ENCODE measurements at regions of chr1 and their contacts with region 1.

Region 1: DNA sequence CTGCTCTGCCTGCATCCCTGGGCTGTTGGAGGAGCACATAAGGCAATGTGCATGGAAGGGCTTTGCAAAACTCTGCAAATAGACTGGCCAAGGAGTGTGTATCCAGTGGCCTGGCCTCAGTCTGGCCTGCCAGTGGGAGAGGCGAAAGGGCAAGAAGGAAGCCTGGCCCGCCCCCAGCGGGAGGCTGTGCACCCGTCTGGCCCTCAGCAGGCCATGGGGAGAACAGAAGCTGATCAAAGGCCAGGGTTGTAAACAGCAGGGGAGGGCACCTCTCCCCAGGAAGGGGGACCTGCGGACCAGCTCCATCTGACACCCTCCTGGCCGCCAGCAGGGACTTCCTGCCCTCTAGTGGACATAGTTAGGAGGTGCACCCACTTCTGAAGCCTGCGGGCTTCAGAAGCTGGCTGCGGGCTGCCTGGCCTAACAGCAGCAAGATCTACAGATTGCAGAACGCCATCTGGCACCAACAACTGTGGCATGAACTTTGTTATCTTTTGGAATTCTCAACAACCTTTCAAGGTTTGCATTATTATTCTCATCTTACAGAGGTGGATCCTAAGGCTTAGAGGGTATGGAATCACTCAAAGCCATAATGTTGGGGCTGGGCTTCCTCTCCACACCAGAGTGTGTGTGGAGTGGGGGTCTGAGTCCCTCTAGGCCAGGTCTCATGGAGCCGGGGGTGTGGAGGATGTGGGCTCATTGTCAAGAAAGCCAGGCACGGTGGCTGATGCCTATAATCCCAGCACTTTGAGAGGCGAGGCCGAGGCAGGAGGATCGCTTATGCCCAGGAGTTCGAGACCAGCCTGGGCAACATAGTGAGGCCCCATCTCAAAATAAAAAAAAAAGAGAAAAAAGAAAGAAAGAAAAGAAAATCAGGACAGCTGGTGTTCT is 18.9 kb upstream of the CDK18 start:
- DNase-seq: peak; percentile 92
- H3K4me3 ChIP-seq: peak overlapping the region in 1 of 2 experiments; percentile 22; a peak in 1 of 4 replicates
- H3K27ac ChIP-seq: no peak overlapping the region
- H3K4me1 ChIP-seq: peaks cover 0 to 3% of the 10 kb centered on the region in 2 experiments; a peak in 2 of 4 replicates
- H3K27me3 ChIP-seq: peaks cover 16% of the 10 kb centered on the region; the same call in 1 of the 2 replicates
- CTCF ChIP-seq: peak; percentile 93
- EP300 ChIP-seq: no peak; a peak in 1 of 4 replicates
- RAD21 ChIP-seq: peak; percentile 91

Region 2: GRCh38 chr1:205326812-205327466 is 158.6 kb before region 1 on chr1:
- CTCF ChIA-PET with region 1: interaction called, 13 read pairs
- POLR2A ChIA-PET with region 1: no interaction called
- DNase-seq: no peak
- H3K4me3 ChIP-seq: no peak overlapping the region
- H3K27ac ChIP-seq: no peak overlapping the region
- H3K4me1 ChIP-seq: peaks cover under 1 to 10% of the 10 kb centered on the region in 2 experiments; a peak in 3 of 4 replicates
- H3K27me3 ChIP-seq: no peaks in the 10 kb centered on the region
- CTCF ChIP-seq: no peak
- EP300 ChIP-seq: no peak
- RAD21 ChIP-seq: no peak

Region 3: GRCh38 chr1:205365945-205366463 is 119.6 kb before region 1 on chr1:
- CTCF ChIA-PET with region 1: interaction called, 14 read pairs
- POLR2A ChIA-PET with region 1: interaction called, 3 read pairs
- DNase-seq: no peak
- H3K4me3 ChIP-seq: no peak overlapping the region
- H3K27ac ChIP-seq: no peak overlapping the region
- H3K4me1 ChIP-seq: no peaks in the 10 kb centered on the region; a peak in 1 of 4 replicates
- H3K27me3 ChIP-seq: peaks cover 1% of the 10 kb centered on the region; the same call in 1 of the 2 replicates
- CTCF ChIP-seq: no peak
- EP300 ChIP-seq: no peak
- RAD21 ChIP-seq: no peak

Region 4: GRCh38 chr1:205396967-205397616 is 88.5 kb before region 1 on chr1:
- CTCF ChIA-PET with region 1: interaction called, 190 read pairs
- POLR2A ChIA-PET with region 1: no interaction called
- DNase-seq: peak; percentile 75
- H3K4me3 ChIP-seq: peak overlapping the region in 1 of 2 experiments; percentile 38; a peak in 1 of 4 replicates
- H3K27ac ChIP-seq: no peak overlapping the region
- H3K4me1 ChIP-seq: no peaks in the 10 kb centered on the region
- H3K27me3 ChIP-seq: no peaks in the 10 kb centered on the region; the same call in 1 of the 2 replicates
- CTCF ChIP-seq: peak; percentile 65
- EP300 ChIP-seq: no peak
- RAD21 ChIP-seq: peak; percentile 94

Region 5: DNA sequence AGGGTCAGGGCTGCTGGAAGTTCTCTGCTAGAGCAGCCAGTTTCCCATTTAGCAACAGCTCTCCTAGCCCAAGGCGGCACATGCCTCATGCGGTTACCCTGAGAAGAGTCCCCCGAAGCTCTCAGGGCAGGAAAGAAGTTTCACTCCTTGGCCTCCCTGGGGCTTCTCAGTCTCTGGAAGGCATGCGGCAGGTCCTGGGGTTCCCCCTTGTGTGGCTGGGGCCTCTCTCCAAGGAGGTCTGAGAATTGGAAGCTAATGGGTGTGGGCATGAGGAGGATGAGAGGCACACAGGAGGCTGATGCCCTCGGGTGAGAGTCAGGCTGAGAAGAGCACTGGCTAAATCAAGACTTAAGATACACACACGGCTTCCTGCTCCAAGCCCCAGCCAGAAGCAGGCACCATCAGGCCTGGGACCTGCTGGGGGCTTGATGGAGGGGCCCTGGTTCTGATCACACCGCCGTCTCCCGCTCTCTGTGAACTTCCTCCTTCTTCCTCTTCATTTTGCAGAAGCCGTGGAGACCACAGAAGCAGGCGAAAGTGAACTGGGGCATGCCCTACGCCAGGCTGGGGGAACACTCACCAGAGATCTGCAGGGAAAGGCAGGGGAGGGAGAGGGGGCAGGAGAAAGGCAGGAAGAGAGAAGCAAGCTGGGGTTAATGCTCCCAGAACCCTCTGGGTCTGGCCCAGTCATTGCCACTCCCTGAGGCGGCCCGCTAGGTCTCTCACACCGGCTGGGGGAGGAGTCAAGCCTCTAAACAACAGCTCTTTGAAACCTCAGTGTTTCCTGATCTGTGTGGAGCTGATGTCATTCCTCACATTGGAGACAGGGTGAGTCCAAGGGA is 44.9 kb before region 1 on chr1:
- CTCF ChIA-PET with region 1: interaction called, 10 read pairs
- POLR2A ChIA-PET with region 1: no interaction called
- DNase-seq: no peak
- H3K4me3 ChIP-seq: no peak overlapping the region
- H3K27ac ChIP-seq: no peak overlapping the region
- H3K4me1 ChIP-seq: peaks cover 3 to 5% of the 10 kb centered on the region in 2 experiments; a peak in 2 of 4 replicates
- H3K27me3 ChIP-seq: peaks cover 40% of the 10 kb centered on the region; the same call in 1 of the 2 replicates
- CTCF ChIP-seq: no peak
- EP300 ChIP-seq: no peak
- RAD21 ChIP-seq: no peak

Region 6: DNA sequence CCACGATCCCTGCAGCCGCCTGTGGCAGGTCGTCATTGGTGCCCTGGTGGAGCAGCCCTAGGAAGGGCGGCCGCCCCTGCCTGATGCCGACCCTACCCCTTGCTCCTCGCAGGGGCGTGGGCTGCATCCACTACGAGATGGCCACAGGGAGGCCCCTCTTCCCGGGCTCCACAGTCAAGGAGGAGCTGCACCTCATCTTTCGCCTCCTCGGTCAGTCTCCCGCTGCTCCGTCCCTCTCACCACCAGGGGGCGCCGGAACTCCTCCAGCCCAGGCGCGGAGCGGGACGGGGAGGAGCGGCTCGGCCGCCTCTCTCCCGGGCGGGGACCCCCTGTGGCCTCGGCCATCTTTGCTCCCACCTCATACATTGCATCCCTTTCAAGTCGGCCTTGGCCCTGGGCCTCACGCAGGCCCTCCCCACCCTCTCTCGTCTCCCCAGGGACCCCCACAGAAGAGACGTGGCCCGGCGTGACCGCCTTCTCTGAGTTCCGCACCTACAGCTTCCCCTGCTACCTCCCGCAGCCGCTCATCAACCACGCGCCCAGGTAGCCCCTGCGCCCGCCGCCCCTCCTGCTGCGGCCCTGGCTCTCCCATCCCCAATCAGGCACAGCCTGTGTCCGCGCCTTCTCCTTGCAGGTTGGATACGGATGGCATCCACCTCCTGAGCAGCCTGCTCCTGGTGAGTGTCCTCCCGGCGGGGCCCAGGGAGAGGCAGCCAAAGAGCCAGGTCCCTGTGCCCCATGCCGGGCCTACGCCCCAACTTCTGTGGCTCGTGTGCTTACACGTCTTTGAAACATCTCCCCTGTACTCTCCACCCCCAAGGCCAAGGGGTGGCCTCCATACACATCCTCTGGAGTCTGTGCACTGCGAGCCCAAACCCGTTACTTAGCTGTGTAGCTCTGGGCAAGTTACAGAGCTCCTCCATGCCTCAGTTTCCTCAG is 43.6 kb after region 1 on chr1:
- CTCF ChIA-PET with region 1: interaction called, 1,333 read pairs
- POLR2A ChIA-PET with region 1: interaction called, 6 read pairs
- DNase-seq: peak; percentile 97
- H3K4me3 ChIP-seq: peak overlapping the region; percentile 40 to 59
- H3K27ac ChIP-seq: no peak overlapping the region
- H3K4me1 ChIP-seq: peaks cover 0 to 21% of the 10 kb centered on the region in 2 experiments; a peak in 1 of 4 replicates
- H3K27me3 ChIP-seq: no peaks in the 10 kb centered on the region
- CTCF ChIP-seq: peak; percentile 90
- EP300 ChIP-seq: no peak
- RAD21 ChIP-seq: peak; percentile 83